A673 (cell line): ENCODE measurements at regions of chr12 and their contacts with region 1.

Region 1: GRCh38 chr12:68455691-68456345 is 123.7 kb upstream of the MDM1 start:
- DNase-seq: peak; percentile 79
- H3K4me3 ChIP-seq: no peak overlapping the region
- H3K27ac ChIP-seq: peak overlapping the region; percentile 28
- H3K4me1 ChIP-seq: peaks cover 46% of the 10 kb centered on the region
- H3K27me3 ChIP-seq: no peaks in the 10 kb centered on the region
- CTCF ChIP-seq: no peak

Region 2: DNA sequence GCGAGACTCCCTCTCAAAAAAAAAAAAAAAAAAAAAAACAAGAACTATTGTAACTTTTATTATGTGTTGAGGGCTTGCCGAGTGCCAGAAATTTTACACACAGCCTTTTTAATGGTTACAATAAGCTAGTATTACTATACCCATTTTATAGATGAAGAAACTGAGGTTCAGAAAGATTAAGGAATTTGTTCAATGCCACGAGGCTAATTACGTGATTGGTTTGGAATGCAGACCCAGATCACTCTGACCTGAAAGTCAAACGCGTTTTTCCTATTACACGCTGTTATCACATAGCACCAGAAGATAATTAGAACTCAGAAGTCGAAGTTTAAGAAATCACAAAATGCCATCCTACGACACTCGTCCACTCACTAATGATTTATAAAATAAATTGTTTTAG is 106.0 kb after region 1 on chr12:
- CTCF ChIA-PET with region 1: interaction called, 11 read pairs
- POLR2A ChIA-PET with region 1: no interaction called
- intact Hi-C with region 1: no loop called
- DNase-seq: no peak
- H3K4me3 ChIP-seq: no peak overlapping the region
- H3K27ac ChIP-seq: no peak overlapping the region
- H3K4me1 ChIP-seq: no peaks in the 10 kb centered on the region
- H3K27me3 ChIP-seq: no peaks in the 10 kb centered on the region
- CTCF ChIP-seq: no peak